Activated CD4-positive, alpha-beta T cell treated with anti-CD3 and anti-CD28 coated beads for 36 hours (primary cell): ENCODE measurements at regions of chr12 and their contacts with region 1.

Region 1: GRCh38 chr12:105107494-105108371 is at the start of gene WASHC4:
- DNase-seq: peak; percentile 97
- ATAC-seq: peak; percentile 96
- H3K4me3 Mint-ChIP-seq: peak within 1 kb of the TSS; percentile 93
- H3K27ac Mint-ChIP-seq: peak within 1 kb of the TSS; percentile 88
- H3K4me1 Mint-ChIP-seq: peaks cover 33% of the 10 kb centered on the region
- H3K27me3 Mint-ChIP-seq: peaks cover 13% of the 10 kb centered on the region
- total RNA-seq, gene WASHC4: 29.6 to 35.9 TPM

Region 2: GRCh38 chr12:103840876-103841689 is 1266.7 kb before region 1 on chr12 and contains the start of gene NT5DC3:
- CTCF ChIA-PET with region 1: no interaction called
- POLR2A ChIA-PET with region 1: no interaction called
- intact Hi-C with region 1: loop called in 1 of 2 experiments (anchors 1 kb)
- DNase-seq: peak; percentile 91
- ATAC-seq: peak; percentile 88
- H3K4me3 Mint-ChIP-seq: peak within 1 kb of the TSS; percentile 77
- H3K27ac Mint-ChIP-seq: peak within 1 kb of the TSS; percentile 63
- H3K4me1 Mint-ChIP-seq: peaks cover 22% of the 10 kb centered on the region
- H3K27me3 Mint-ChIP-seq: no peaks in the 10 kb centered on the region
- total RNA-seq, gene NT5DC3: 7.3 to 8.9 TPM

Region 3: GRCh38 chr12:104137913-104138796 is 969.6 kb before region 1 on chr12 and contains the start of gene NFYB:
- CTCF ChIA-PET with region 1: no interaction called
- POLR2A ChIA-PET with region 1: no interaction called
- intact Hi-C with region 1: loop called in 1 of 2 experiments (anchors 2 kb)
- DNase-seq: peak; percentile 95
- ATAC-seq: peak; percentile 98
- H3K4me3 Mint-ChIP-seq: peak within 1 kb of the TSS; percentile 83
- H3K27ac Mint-ChIP-seq: peak within 1 kb of the TSS; percentile 90
- H3K4me1 Mint-ChIP-seq: peaks cover 19% of the 10 kb centered on the region
- H3K27me3 Mint-ChIP-seq: no peaks in the 10 kb centered on the region
- total RNA-seq, gene NFYB: 18.8 to 27.2 TPM

Region 4: DNA sequence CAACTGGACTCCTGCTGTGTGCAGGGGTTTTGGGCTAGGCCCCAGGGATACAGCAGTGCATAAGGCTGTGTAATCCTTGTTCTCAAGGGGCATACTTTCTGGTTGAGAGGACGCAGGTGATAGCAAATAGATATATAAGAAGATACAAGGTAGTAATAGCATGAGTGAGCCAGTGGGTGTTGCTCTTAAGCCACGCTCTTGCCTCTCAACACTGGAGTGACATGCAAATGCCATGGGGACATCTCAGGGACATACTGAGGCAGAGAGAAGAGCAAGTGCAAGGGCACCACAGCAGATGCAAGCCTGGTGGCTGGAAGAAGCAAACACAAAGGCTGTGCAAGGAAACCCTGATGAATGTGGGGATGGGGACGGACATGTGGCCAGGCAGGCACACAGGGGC is 427.7 kb before region 1 on chr12:
- CTCF ChIA-PET with region 1: no interaction called
- POLR2A ChIA-PET with region 1: no interaction called
- intact Hi-C with region 1: loop called in 1 of 2 experiments (anchors 1 kb)
- DNase-seq: peak; percentile 62
- ATAC-seq: peak; percentile 59
- H3K4me3 Mint-ChIP-seq: no peak overlapping the region
- H3K27ac Mint-ChIP-seq: peak overlapping the region; percentile 69
- H3K4me1 Mint-ChIP-seq: peaks cover 51% of the 10 kb centered on the region
- H3K27me3 Mint-ChIP-seq: no peaks in the 10 kb centered on the region

Region 5: GRCh38 chr12:105053116-105053572 is 54.6 kb before region 1 on chr12:
- CTCF ChIA-PET with region 1: no interaction called
- POLR2A ChIA-PET with region 1: no interaction called
- intact Hi-C with region 1: no loop called
- DNase-seq: peak; percentile 85
- ATAC-seq: peak; percentile 85
- H3K4me3 Mint-ChIP-seq: no peak overlapping the region
- H3K27ac Mint-ChIP-seq: no peak overlapping the region
- H3K4me1 Mint-ChIP-seq: peaks cover 4% of the 10 kb centered on the region
- H3K27me3 Mint-ChIP-seq: peaks cover 4% of the 10 kb centered on the region

Region 6: DNA sequence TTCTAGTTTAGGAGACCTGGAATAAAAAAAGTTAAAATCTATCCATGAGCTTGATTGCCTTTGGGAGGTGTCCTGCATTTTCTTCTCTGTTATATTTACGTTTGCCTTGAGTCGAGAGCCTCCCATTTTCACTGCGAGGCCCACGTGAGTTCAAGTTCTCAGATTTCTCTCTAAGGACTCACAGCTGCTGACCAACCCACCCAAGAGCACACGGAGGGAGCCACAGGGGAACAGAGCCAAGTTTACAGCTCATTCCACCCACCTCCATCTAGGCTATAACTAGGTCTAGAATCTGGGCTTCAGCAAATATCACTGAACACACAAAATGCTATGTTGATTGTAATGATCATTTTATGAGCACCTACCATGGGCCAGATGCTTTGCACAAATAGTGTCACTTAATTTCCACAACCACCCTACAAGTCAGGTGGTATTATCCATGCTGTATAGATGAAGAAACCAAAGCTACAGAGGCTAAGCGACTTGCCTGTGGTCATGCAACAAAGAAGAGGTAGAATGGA is 40.2 kb before region 1 on chr12:
- CTCF ChIA-PET with region 1: no interaction called
- POLR2A ChIA-PET with region 1: no interaction called
- intact Hi-C with region 1: no loop called
- DNase-seq: no peak
- ATAC-seq: no peak
- H3K4me3 Mint-ChIP-seq: no peak overlapping the region
- H3K27ac Mint-ChIP-seq: no peak overlapping the region
- H3K4me1 Mint-ChIP-seq: no peaks in the 10 kb centered on the region
- H3K27me3 Mint-ChIP-seq: peaks cover 3% of the 10 kb centered on the region

Region 7: DNA sequence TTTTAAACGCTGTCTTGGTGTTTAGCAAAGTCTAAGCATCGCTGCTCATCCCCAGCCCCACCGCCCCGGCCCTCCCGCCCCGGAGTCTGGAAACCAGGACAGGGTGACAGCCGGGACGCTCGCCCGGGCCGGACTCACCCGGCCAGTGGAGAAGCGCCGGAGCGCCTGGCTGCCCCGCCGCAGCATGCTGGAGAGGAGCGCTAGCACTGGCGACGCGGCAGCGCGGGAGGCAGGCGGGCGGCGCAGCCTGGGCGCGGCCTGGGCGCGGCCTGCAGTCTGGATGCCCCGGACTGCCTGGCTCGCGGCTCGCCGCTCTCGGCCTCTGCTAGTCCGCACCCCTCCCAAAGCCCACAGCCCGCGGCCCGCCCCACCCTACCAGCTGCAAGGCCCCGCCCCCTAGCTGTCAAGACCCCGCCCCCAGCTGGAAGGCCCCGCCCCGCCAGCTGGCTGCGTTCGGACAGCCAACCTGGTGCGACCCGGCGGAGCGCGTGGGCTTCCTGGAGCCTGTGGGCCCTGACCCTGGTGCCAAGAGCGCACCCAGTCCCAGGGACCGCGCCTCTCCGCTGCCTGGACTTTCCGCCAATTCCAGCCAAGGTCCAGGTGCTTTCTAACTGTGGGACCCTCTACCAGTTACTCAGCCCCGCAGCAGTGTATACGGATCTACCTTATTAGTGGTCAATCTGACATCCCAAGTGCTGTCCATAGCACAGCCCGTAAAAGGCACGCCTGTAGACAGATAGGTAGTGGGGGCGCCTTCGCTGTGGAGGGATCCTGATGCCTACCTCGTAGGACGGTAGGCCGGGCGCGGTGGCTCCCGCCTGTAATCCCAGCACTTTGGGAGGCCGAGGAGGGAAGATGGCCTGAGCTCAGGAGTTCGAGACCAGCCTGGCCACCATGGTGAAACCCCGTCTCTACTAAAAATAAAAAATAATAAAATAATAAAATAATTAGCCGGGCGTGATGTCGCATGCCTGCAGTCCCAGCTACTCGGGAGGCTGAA is 23.2 kb before region 1 on chr12 and contains the start of gene ALDH1L2:
- CTCF ChIA-PET with region 1: interaction called, 3 read pairs
- POLR2A ChIA-PET with region 1: no interaction called
- intact Hi-C with region 1: loop called in 1 of 2 experiments (anchors 1 kb)
- DNase-seq: peak; percentile 80
- ATAC-seq: peak; percentile 96
- H3K4me3 Mint-ChIP-seq: peak within 1 kb of the TSS; percentile 76
- H3K27ac Mint-ChIP-seq: peak within 1 kb of the TSS; percentile 59
- H3K4me1 Mint-ChIP-seq: peaks cover 7% of the 10 kb centered on the region
- H3K27me3 Mint-ChIP-seq: peaks cover 24% of the 10 kb centered on the region
- total RNA-seq, gene ALDH1L2: 7.1 to 7.6 TPM

Region 8: DNA sequence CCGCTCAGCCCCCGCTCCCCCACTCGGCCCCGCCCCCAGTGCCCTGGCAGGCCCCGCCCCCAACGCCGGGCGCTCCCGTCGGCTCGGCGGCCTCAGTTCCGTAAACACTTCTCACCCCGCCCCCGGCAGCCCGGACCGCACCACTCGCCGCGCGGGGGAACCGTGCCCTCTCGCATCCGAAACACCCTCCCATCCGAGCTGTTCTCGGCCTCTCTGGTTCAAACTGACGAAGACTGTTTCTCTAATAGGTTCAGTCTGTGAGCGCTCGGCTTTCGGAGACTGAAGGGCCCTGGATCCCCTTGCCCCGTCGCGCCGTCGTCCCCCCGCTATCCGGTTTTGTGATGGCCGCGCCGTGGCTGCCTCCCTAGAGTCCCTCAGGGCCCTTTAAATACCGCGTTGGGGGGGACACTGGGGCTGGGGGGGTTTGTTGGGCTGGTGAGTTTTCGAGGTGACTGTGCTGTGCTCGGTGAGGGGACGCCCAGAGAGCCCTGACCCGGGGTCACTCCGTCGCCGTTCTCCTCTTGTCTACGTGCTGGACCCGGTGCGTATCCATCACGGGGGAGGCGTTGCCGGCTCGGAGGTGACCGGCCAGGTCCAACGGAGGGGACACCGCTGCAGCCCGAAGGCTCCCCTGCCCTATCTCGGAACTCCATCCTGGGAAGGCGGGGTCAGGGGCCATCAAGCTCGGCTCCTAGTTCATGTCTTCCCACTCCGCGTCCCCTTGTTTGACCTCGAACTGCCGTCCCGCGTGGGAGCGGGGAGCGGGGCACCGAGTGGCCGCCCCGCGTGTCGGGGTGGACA is 1194.9 kb after region 1 on chr12 and contains the start of gene TCP11L2:
- CTCF ChIA-PET with region 1: no interaction called
- POLR2A ChIA-PET with region 1: no interaction called
- intact Hi-C with region 1: loop called in 1 of 2 experiments (anchors 5 kb)
- DNase-seq: peak; percentile 94
- ATAC-seq: peak; percentile 67
- H3K4me3 Mint-ChIP-seq: peak within 1 kb of the TSS; percentile 78
- H3K27ac Mint-ChIP-seq: peak within 1 kb of the TSS; percentile 99
- H3K4me1 Mint-ChIP-seq: peaks cover 59% of the 10 kb centered on the region
- H3K27me3 Mint-ChIP-seq: no peaks in the 10 kb centered on the region
- total RNA-seq, gene TCP11L2: 8.6 to 11.8 TPM